Thyroid gland (tissue), 4 donors: ENCODE measurements at regions of chr3 and their contacts with region 1.

Region 1: DNA sequence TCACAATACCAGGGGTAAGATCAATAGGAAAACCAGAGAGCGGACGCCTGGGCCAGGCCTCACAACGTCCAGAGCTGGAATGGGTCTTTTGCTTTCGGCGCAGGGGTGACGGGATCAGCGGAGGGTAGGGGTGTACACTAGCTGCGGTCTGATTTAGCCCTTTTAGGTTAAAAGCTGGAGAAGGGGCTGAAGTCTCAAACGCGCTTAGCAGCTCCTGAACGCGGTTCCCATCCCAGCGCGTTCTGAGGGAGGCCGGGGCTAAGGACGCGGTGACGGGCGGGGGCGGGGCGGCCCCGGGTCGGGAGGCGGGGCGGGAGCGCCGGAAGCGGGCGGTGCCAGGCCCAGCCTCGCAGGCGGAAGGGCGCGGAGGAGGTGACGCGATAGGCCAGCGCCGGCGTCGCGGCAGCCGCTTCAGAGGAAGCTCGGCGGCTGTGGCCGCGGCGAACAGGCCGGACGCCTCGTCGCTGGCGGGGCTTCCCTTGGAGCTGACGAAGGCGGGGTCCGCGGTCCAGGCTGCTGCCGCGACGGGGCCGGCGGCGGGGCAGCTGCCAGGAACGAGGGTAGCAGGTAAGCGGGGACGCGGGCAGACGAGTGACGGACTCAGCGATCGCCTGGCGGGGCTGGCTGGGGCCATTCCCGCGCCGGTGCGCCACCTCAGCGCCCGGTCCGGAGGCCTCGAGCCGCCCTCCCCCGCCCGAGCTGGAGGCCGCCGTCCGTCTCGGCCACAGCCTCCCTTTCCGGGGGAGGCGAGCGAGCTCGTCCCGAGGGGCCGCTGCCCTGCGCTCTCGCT is at the start of gene SENP5:
- DNase-seq: peak; percentile 88 to 89
- H3K4me3 ChIP-seq: peak within 1 kb of the TSS; percentile 77 to 97 (median 91)
- H3K27ac ChIP-seq: peak within 1 kb of the TSS; percentile 72 to 94 (median 83)
- H3K4me1 ChIP-seq: peaks cover 15 to 20% of the 10 kb centered on the region in 2 donors
- H3K27me3 ChIP-seq: no peaks in the 10 kb centered on the region
- CTCF ChIP-seq: no peak
- POLR2A ChIP-seq: peak in 1 of 2 donors; percentile 89
- total RNA-seq, gene SENP5: 37.4 to 67.2 (median 50.9) TPM

Region 2: GRCh38 chr3:196942226-196942914 is 74.7 kb after region 1 on chr3 and contains the start of gene NCBP2:
- intact Hi-C with region 1: loop called (anchors 2 kb)
- DNase-seq: peak; percentile 98 to 99
- H3K4me3 ChIP-seq: peak within 1 kb of the TSS; percentile 67 to 100 (median 96)
- H3K27ac ChIP-seq: peak within 1 kb of the TSS; percentile 51 to 79 (median 63)
- H3K4me1 ChIP-seq: peaks cover 14 to 19% of the 10 kb centered on the region in 2 donors
- H3K27me3 ChIP-seq: no peaks in the 10 kb centered on the region
- CTCF ChIP-seq: peak in 5 of 6 experiments; percentile 37 to 77 (median 55)
- POLR2A ChIP-seq: peak; percentile 52 to 81
- total RNA-seq, gene NCBP2: 42.4 to 61.3 (median 53.6) TPM